Left colon (tissue), 2 donors: ENCODE measurements at regions of chr9 and their contacts with region 1.

Region 1: GRCh38 chr9:135085830-135086546 is 1.5 kb upstream of the OLFM1 start:
- DNase-seq: peak; percentile 44 to 85
- ATAC-seq: peak; percentile 80

Region 2: GRCh38 chr9:135336738-135337527 is 250.9 kb after region 1 on chr9:
- intact Hi-C with region 1: loop called (anchors 5 kb)
- DNase-seq: no peak
- ATAC-seq: no peak

Region 3: DNA sequence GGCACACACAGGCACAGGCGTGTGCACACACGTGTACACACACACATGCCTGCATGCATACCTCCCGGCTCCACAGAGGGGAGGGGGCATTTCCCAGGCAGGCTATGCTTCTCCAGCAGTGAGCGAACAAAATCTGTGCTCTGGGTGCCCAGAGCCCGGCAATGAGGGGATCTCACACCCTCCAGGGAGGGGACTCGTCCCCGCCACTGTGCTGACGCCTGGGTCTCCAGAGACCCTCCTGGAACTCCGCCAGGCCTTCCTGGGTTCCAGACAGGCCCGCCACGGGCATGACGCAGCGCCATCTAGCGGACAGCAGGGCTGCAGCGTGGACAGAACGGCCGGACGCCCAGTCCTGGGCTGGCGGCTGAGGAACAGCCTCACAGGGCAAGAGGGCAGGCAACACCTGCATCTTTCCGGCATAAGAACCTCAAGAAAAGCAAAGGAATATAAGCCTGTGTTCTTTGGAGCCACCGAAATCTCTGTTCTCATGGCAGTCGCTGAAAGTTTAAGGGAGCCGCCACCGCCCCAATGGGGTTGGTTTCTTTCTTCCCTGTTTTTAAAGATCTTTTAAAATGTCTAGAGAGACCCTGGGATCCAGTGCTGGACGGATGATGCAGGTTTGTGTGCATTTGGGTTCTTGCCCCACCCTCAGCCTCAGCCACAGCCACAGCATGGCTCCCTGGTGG is 258.0 kb after region 1 on chr9:
- intact Hi-C with region 1: loop called (anchors 5 kb)
- DNase-seq: peak; percentile 30 to 69
- ATAC-seq: peak; percentile 77

Region 4: DNA sequence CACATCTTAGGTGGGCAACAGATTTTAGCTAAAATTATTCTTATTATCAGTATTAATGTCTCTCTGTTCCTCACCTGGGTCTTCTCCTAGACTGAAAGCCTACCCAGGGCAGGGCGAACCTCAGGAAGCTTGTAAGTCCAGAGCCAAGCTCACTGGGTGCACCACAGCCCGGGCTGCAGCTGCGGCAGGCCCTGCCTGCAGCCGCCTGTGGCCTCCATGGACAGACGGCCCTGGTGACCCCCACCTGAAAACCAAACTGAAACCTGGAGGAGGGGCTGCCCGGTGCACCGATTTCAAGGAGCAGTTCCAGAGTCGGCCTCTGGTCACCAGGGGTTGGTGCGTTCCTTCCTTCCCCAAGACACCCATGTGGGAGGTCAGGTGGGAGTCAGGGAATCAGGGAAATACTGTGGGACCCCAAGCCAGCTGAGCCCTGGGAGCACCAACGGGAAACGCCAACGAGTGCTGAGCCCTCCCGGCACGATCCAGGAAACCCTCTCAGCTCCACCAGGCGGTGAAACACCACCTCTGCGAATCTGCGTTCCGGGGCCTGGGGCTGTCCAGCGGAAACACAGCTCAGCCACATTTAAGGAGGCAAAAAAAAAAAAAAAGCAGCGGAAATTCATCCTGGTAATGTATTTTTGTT is 325.0 kb after region 1 on chr9:
- intact Hi-C with region 1: loop called (anchors 5 kb)
- DNase-seq: peak in 1 of 2 donors; percentile 12
- ATAC-seq: no peak